ENCODE measurements at regions of chr12 and their contacts with region 1.

Region 1: DNA sequence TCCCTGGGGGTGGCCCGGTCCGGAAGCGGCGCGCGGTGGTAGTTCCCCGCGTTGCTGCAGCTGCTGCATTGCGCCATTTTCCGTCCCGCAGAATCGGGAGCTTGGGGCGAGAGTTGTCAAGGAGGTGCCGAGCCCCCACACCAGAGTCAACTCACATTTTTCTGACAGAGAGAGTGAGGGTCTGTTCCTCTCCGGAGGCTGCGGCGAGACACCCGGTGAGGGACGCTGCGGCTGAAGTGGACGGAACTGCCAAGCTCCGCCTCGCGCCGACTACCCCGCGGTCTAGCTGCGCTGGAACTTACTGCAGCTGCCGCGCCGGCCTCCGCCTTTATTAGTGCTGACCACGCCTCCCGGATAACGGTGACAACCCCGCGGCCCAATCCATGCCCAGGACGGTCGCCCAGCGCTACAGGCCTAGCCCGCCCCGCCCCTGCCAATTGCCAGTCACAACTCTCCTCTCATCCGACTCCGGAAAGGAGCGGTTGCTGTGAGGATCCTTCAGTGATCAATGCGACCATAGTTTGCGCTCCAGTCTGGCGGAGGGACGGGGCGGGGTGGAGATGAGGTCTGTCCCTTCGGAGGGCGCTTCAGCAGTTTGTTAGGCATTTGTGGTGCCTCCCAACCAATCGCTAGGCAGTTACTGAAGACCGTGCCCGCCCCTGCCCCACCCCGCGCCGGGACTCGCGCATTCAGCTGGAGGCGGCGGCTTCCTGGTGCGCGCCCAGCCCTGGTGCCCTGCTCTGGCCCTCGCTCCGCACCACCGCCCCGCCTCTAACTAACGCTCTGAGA is at the start of gene VAMP1:
- DNase-seq: peak; percentile 96
- CTCF ChIP-seq: no peak

Region 2: DNA sequence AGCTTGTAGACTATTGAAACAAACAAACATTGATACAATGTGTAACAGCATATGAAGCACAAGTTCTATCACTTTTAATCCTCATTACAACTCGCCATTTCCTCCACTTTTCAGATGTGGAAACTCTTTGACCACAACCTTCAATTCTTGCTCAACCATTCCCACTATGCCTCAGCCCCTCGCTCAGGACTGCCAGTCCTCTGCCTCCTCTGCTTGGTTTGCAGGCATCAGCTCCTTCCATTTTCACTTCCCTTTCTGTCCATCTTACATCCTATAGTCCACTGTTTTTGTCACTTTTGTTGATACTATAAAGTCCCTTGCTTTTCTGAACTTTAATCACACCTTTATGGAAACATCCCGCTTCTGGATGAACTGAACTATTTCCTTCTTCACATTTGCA is 54.0 kb before region 1 on chr12:
- CTCF ChIA-PET with region 1: interaction called, 89 read pairs
- POLR2A ChIA-PET with region 1: interaction called, 9 read pairs
- DNase-seq: no peak
- CTCF ChIP-seq: no peak

Region 3: GRCh38 chr12:6434205-6435140 is 36.1 kb before region 1 on chr12:
- CTCF ChIA-PET with region 1: interaction called, 28 read pairs
- POLR2A ChIA-PET with region 1: interaction called, 7 read pairs
- DNase-seq: no peak
- CTCF ChIP-seq: no peak

Region 4: DNA sequence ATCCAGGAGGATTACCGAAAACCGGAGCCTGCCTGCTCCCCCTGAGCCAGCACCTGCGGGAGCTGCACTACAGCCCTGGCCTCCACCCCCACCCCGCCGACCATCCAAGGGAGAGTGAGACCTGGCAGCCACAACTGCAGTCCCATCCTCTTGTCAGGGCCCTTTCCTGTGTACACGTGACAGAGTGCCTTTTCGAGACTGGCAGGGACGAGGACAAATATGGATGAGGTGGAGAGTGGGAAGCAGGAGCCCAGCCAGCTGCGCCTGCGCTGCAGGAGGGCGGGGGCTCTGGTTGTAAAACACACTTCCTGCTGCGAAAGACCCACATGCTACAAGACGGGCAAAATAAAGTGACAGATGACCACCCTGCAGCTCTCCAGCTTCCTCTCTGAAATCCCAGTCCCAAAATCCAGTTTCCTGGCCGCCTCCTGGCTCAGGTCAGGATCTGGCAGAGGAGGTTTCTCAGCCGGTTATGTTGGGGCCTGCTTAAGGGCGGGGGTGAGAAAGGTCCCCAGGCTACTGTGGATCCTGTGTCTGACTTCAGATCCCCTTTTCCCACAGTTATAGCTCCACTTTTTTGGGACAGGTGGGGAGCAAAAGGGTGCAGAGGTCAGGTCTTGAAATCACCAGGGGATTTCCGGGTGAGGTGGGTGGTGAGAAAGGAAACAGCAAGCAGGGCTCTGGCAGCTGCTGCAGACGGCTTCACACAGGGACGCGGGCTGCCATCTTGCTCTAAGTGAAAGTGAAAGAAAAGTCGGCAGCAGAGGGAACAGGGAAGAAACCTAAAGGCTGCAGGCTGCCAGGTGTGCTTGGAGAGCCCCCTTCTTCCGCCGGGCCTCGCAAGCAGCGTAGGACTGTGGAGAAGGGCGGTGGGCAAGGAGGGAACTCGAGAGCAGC is 19.0 kb before region 1 on chr12 and contains the start of gene TAPBPL:
- CTCF ChIA-PET with region 1: interaction called, 76 read pairs
- POLR2A ChIA-PET with region 1: interaction called, 28 read pairs
- DNase-seq: peak; percentile 84
- CTCF ChIP-seq: no peak

Region 5: GRCh38 chr12:6533923-6534694 is 63.5 kb after region 1 on chr12 and contains the start of gene GAPDH:
- CTCF ChIA-PET with region 1: interaction called, 24 read pairs
- POLR2A ChIA-PET with region 1: interaction called, 26 read pairs
- DNase-seq: peak; percentile 95
- CTCF ChIP-seq: no peak

Region 6: DNA sequence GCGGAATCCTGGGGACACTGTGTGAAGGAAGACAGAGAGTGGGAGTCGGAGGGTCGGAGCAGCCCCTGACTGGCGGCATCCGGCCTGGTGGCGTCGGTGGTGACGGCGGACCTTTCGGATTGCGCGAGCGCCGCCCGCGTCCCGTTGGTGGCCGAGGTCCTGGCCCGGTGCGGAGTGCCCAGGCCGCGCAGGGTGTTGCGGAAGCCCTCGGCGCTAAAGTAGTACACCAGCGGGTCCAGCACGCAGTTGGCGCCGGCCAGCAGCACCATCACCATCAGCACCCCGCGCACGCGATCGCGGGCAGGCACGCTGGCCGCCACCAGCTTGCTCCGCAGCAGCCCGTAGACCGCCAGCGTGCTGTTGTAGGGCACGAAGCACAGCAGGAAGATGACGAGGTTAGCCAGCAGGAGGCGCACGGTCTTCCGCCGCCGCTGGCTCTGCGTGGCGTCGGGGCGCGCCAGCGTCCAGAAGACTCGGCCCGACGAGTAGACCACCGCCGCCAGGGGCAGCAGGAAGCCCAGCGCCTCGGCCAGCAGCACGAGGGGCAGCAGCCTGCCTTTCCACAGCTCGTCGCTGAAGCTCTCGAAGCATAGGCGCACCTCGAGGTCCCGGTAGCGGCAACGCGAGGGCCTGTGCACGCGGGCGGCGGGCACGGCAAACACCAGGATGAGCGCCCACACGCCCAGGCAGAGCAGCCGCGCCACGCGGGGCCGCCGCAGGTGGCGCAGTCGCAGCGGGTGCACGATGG is 149.7 kb after region 1 on chr12:
- CTCF ChIA-PET with region 1: no interaction called
- POLR2A ChIA-PET with region 1: no interaction called
- DNase-seq: no peak
- CTCF ChIP-seq: peak; percentile 19

Region 7: GRCh38 chr12:6672143-6672542 is 201.6 kb after region 1 on chr12:
- CTCF ChIA-PET with region 1: no interaction called
- POLR2A ChIA-PET with region 1: no interaction called
- DNase-seq: no peak
- CTCF ChIP-seq: no peak

Measured in GM10248 (cell line).